Left ventricle myocardium superior (tissue), 1 donor: ENCODE measurements at regions of chr3 and their contacts with region 1.

Region 1: DNA sequence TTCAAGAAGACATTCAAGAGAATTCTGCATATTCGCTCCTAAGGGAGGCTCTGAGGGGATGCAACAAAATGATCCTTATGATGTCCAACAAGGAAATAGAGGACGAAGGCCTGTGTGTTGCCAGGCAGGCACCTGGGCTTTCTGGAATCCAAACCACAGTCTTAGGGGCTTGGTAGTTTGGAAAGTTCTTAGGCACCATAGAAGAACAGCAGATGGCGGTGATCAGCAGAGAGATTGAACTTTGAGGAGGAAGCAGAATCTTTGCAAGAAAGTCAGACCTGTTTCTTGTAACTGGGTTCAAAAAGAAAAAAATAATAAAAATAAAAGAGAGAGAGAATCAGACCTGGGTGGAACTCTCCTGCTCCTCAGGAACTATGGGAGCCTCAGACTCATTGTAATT is 11.7 kb upstream of the ATG7 start:
- DNase-seq: no peak
- ATAC-seq: no peak

Region 2: DNA sequence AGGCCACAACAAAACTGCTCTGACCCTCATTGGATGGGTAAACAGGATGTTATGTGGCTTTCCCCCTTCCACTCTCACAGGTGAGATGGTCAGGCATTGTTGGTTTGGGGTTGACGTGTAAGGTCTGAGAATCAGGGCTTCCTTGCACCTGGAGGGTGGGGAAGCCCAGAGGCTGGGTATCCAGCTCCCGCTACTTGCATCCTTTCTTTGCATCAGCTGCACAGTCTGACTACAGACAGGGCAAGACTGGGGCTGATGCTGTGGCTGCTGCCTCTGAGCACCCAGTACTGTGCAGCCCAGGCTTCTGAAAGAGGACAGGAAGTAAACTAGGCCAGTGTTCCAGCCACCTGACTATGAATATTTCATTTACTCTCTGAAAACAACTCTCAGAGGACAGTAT is 697.1 kb before region 1 on chr3:
- intact Hi-C with region 1: loop called (anchors 10 kb)
- DNase-seq: no peak
- ATAC-seq: no peak